IMR-90 (cell line): ENCODE measurements at regions of chr21 and their contacts with region 1.

Region 1: GRCh38 chr21:21851657-21852056 is 853.4 kb downstream of the NCAM2 start:
- DNase-seq: peak; percentile 13
- ATAC-seq: no peak
- H3K4me3 ChIP-seq: no peak overlapping the region
- H3K27ac ChIP-seq: no peak overlapping the region
- H3K4me1 ChIP-seq: no peaks in the 10 kb centered on the region
- H3K27me3 ChIP-seq: no peaks in the 10 kb centered on the region
- CTCF ChIP-seq: no peak
- POLR2A ChIP-seq: no peak
- RAD21 ChIP-seq: no peak

Region 2: DNA sequence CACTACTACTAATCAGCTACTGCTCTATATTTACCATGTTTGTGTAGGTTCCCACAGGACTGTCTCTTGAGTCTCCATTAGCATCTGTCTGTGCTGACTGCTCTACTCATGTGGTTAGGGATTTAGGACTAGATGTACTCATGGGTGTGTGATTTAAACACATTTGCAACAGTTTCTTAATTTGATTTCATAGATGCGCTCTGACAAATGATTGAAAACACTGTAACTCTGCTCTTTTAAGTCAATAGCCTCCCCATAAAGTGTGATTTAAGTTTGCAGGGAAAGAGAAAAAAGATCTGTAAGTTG is 44.1 kb before region 1 on chr21:
- CTCF ChIA-PET with region 1: no interaction called
- POLR2A ChIA-PET with region 1: no interaction called
- dilution Hi-C with region 1: no loop called
- in situ Hi-C with region 1: no loop called
- intact Hi-C with region 1: loop called (anchors 1 kb)
- DNase-seq: no peak
- ATAC-seq: no peak
- H3K4me3 ChIP-seq: no peak overlapping the region
- H3K27ac ChIP-seq: no peak overlapping the region
- H3K4me1 ChIP-seq: no peaks in the 10 kb centered on the region
- H3K27me3 ChIP-seq: no peaks in the 10 kb centered on the region
- CTCF ChIP-seq: no peak
- POLR2A ChIP-seq: no peak
- RAD21 ChIP-seq: no peak